SK-N-SH (cell line): ENCODE measurements at regions of chr12 and their contacts with region 1.

Region 1: DNA sequence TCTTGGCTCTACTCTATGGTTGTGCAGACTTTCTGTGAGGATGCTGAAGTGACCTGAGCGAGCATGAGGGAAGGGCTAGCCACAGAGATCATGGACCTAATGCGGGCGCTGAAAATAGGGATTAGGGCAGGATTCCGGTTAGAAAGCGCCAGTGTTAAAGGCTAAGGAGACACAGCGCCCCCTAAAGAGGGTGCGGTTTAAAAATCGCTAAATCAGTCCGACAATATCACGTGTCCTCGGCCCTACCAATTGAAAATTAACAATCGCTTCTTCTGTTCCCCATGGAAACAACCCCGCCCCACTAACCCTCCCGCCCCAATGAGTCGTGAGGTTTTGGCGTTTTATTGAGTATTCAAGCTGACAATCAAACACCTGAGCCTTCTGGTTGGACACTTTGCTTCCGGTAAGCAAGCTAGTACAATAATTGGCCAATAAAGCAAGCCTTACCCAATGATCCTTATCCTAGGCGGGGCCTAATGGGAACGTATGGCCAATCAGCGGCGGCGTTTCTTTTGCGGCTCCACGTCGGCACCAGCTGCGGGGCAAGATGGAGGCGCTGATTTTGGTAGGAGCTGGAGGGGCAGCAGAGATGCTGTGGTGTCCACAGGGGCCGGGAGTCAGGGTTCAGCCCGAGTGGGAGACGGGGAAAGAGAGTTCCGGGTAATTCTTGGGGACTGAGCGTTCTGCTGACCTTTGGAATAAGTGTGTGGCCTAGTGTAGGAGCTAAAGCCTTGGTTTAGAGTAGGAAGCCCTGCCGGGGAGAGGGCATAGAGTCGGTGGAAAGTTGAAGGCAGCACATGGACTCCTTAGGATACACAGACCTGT is at the start of gene COPZ1:
- DNase-seq: peak; percentile 90
- H3K4me3 ChIP-seq: peak within 1 kb of the TSS; percentile 68 to 86
- H3K27ac ChIP-seq: peak within 1 kb of the TSS; percentile 77 to 81
- H3K4me1 ChIP-seq: peaks cover 0 to 9% of the 10 kb centered on the region in 2 experiments; a peak in 2 of 4 replicates
- H3K27me3 ChIP-seq: no peaks in the 10 kb centered on the region
- CTCF ChIP-seq: peak; percentile 84
- EP300 ChIP-seq: 0 out of 4 replicates have a peak, but pooled peaks of 1 of the 2 experiments have one; percentile 35
- RAD21 ChIP-seq: peak; percentile 80
- polyA plus RNA-seq, gene COPZ1: 111 and 156 TPM in 2 replicates

Region 2: DNA sequence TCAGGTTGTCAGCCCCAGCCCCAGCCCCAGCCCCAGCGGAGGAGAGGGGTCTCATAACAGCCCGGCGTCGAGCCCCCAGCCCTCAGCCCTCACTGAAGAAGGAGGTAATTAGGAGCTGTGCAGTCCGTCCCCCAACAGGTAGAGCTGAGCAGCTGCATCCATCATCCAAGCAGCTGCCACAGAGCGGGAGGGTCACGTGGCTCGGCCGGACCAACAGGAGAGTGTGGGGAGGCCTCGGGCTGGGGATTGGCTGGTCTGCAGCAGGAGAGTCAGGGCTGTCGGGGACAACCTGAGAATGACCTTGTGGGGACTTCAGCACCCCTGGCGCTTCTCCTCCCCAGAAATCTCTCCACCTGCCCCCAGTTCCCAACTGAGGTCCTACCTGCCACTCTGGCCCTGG is 165.7 kb before region 1 on chr12:
- CTCF ChIA-PET with region 1: no interaction called
- POLR2A ChIA-PET with region 1: no interaction called
- DNase-seq: peak; percentile 64
- H3K4me3 ChIP-seq: no peak overlapping the region
- H3K27ac ChIP-seq: no peak overlapping the region
- H3K4me1 ChIP-seq: peaks cover 0 to 9% of the 10 kb centered on the region in 2 experiments; a peak in 1 of 4 replicates
- H3K27me3 ChIP-seq: no peaks in the 10 kb centered on the region
- CTCF ChIP-seq: no peak
- EP300 ChIP-seq: no peak
- RAD21 ChIP-seq: no peak

Region 3: GRCh38 chr12:54220092-54220557 is 104.7 kb before region 1 on chr12:
- CTCF ChIA-PET with region 1: interaction called, 15 read pairs
- POLR2A ChIA-PET with region 1: interaction called, 4 read pairs
- DNase-seq: peak; percentile 75
- H3K4me3 ChIP-seq: no peak overlapping the region; a peak in 1 of 4 replicates
- H3K27ac ChIP-seq: no peak overlapping the region
- H3K4me1 ChIP-seq: peaks cover 3 to 14% of the 10 kb centered on the region in 2 experiments; a peak in 3 of 4 replicates
- H3K27me3 ChIP-seq: no peaks in the 10 kb centered on the region
- CTCF ChIP-seq: peak; percentile 88
- EP300 ChIP-seq: no peak
- RAD21 ChIP-seq: peak; percentile 84

Region 4: DNA sequence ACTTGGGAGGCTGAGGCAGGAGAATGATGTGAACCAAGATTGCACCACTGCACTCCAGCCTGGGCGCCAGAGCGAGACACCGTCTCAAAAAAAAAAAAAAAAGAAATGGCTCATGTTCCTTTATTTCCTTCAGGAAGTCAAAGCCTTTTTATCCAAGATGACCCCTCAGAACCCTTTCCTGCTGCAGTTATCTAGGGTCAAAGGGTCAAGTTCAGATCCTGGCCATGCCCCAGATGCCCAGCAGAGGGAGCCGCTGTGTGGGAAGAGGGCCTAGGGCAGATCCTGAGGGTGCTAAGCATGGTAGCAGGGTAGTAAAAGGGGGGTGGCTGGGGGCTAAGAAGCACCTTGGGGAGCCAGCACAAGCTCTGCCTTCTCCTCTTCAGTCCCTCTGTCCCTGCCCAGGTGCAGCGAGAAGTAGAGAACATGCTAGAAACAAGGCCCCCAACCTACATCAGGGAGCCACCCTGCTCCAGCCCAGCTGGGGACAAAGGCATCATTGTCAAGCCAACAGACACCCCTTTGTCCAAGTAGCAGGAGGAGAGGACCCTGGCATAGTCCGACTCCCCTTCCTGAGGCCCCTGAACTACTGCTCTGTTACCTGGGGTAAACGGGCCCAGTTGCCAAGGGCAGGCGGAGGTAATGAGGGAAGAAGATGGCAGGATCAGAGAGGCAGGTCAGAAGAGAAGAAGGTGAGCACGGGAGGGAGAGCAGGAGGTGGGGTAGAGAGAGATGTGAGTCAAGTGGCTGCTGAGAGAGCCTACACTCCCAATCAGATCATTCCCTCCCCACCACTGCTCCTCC is 30.5 kb before region 1 on chr12:
- CTCF ChIA-PET with region 1: interaction called, 18 read pairs
- POLR2A ChIA-PET with region 1: no interaction called
- DNase-seq: peak; percentile 71
- H3K4me3 ChIP-seq: peak overlapping the region in 1 of 2 experiments; percentile 40; a peak in 1 of 4 replicates
- H3K27ac ChIP-seq: no peak overlapping the region
- H3K4me1 ChIP-seq: peaks cover 0 to 2% of the 10 kb centered on the region in 2 experiments; a peak in 1 of 4 replicates
- H3K27me3 ChIP-seq: no peaks in the 10 kb centered on the region
- CTCF ChIP-seq: peak; percentile 76
- EP300 ChIP-seq: no peak
- RAD21 ChIP-seq: peak; percentile 61

Region 5: DNA sequence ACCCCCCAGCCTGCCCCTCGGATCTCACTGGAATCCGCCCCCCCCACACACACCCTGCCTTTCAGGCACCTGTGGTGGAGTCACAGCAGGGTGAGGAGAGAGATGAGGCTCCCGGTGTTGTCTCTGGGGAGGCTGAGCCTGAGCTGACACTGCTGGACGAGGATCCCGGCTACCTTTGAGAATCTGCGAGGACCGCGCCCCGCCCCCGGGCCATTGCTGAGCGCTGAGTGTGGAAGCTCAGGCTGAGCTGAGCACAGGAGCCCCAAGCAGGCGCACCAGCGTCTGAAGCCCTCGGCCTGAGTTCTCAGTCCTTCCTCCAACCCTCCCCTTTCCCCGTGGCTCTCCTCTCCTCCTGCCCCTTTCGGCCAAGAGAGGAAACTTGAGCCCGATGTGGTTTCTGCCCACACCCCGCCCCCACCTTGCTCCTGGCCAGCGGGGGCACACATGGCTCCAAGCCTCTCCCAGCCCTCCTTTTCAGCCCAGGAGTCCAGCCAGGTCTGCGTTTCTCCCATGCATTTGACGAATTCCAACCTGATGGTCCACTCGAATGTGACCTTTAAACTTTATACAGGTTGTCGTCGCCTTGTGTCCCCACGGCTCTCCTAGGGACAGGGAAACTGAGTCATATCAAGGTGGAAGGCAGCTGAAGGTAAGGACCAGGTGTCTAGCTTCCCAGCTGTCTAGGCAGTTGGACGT is 23.9 kb before region 1 on chr12 and contains the start of gene NFE2:
- CTCF ChIA-PET with region 1: interaction called, 16 read pairs
- POLR2A ChIA-PET with region 1: no interaction called
- DNase-seq: peak; percentile 49
- H3K4me3 ChIP-seq: peak within 1 kb of the TSS in 1 of 2 experiments; percentile 14; a peak in 1 of 4 replicates
- H3K27ac ChIP-seq: no peak within 1 kb of the TSS
- H3K4me1 ChIP-seq: peaks cover 0 to 10% of the 10 kb centered on the region in 2 experiments; a peak in 1 of 4 replicates
- H3K27me3 ChIP-seq: no peaks in the 10 kb centered on the region; the same call in 1 of the 2 replicates
- CTCF ChIP-seq: no peak
- EP300 ChIP-seq: no peak
- RAD21 ChIP-seq: no peak
- polyA plus RNA-seq, gene NFE2: 0.16 and 0.25 TPM in 2 replicates

Region 6: GRCh38 chr12:54398995-54399793 is 74.4 kb after region 1 on chr12:
- CTCF ChIA-PET with region 1: no interaction called
- POLR2A ChIA-PET with region 1: no interaction called
- DNase-seq: peak; percentile 89
- H3K4me3 ChIP-seq: no peak overlapping the region; a peak in 1 of 4 replicates
- H3K27ac ChIP-seq: no peak overlapping the region
- H3K4me1 ChIP-seq: no peaks in the 10 kb centered on the region
- H3K27me3 ChIP-seq: no peaks in the 10 kb centered on the region
- CTCF ChIP-seq: peak; percentile 99
- EP300 ChIP-seq: no peak
- RAD21 ChIP-seq: peak; percentile 88